ENCODE measurements at regions of chr3 and their contacts with region 1.

Region 1: DNA sequence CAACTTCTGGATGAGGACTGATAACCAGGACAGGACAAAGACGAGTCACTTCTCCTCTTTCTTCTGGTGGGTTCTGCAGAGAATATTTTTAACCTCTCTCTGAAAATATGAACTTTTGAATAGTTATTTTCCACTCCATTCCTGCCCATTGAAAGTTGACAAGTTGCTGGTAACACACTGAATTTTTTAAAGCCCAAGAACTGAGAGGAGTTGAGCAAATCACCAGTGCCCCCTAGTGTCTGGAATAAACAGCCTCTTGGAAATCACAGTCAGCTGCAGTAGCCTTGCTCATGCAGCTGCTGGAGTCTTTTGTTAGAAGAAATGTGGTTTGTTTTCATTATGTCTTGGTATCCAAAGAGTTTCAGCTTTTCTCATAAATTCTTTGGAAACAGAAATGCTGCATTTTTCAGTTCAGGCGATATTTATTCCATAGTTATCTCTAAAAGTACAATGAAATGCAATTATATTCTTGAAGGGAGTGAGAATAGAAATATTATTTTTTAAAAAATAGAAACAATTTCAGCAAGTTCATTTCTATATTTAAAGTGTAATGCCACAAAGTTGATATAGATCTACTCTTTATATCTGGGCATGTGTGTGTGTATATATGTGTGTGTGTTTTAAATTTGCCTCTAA is 741.0 kb upstream of the CBLB start:
- DNase-seq: peak; percentile 14 to 37 (median 15)
- H3K4me3 ChIP-seq: no peak overlapping the region
- H3K4me3 Mint-ChIP-seq: no peak overlapping the region
- H3K27ac ChIP-seq: no peak overlapping the region
- H3K27ac Mint-ChIP-seq: no peak overlapping the region
- H3K4me1 ChIP-seq: no peaks in the 10 kb centered on the region
- H3K4me1 Mint-ChIP-seq: no peaks in the 10 kb centered on the region
- H3K27me3 ChIP-seq: no peaks in the 10 kb centered on the region
- H3K27me3 Mint-ChIP-seq: no peaks in the 10 kb centered on the region
- CTCF ChIP-seq: peak; percentile 71

Region 2: DNA sequence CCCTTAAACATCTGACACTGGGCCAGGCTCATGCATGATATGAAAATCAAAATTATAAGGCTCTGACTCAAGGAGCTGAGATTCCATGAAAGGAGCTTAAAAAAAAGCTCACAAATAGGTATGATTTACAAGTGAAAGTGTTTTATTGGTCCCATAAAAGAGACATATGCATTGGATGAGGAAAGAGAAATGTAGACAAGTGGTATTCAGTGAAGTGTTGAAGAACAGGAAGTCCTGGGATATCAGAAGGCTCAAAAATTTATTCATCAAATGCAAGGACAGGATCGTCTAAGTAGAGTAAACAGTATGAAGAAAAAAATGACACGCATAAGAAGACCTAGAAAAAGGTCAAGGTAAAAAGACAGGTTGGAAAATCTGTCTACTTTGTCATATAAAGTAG is 929.8 kb before region 1 on chr3:
- intact Hi-C with region 1: loop called (anchors 5 to 10 kb)
- DNase-seq: no peak
- H3K4me3 ChIP-seq: no peak overlapping the region
- H3K4me3 Mint-ChIP-seq: no peak overlapping the region
- H3K27ac ChIP-seq: no peak overlapping the region
- H3K27ac Mint-ChIP-seq: no peak overlapping the region
- H3K4me1 ChIP-seq: no peaks in the 10 kb centered on the region
- H3K4me1 Mint-ChIP-seq: no peaks in the 10 kb centered on the region
- H3K27me3 ChIP-seq: no peaks in the 10 kb centered on the region
- H3K27me3 Mint-ChIP-seq: no peaks in the 10 kb centered on the region
- CTCF ChIP-seq: no peak

Region 3: GRCh38 chr3:105686278-105686897 is 923.4 kb before region 1 on chr3:
- intact Hi-C with region 1: loop called (anchors 5 to 10 kb)
- DNase-seq: peak; percentile 3 to 12 (median 7)
- H3K4me3 ChIP-seq: no peak overlapping the region
- H3K4me3 Mint-ChIP-seq: no peak overlapping the region
- H3K27ac ChIP-seq: no peak overlapping the region
- H3K27ac Mint-ChIP-seq: no peak overlapping the region
- H3K4me1 ChIP-seq: no peaks in the 10 kb centered on the region
- H3K4me1 Mint-ChIP-seq: no peaks in the 10 kb centered on the region
- H3K27me3 ChIP-seq: no peaks in the 10 kb centered on the region
- H3K27me3 Mint-ChIP-seq: no peaks in the 10 kb centered on the region
- CTCF ChIP-seq: peak; percentile 93

Region 4: GRCh38 chr3:106643684-106644161 is 33.9 kb after region 1 on chr3:
- intact Hi-C with region 1: no loop called
- DNase-seq: no peak
- H3K4me3 ChIP-seq: no peak overlapping the region
- H3K4me3 Mint-ChIP-seq: no peak overlapping the region
- H3K27ac ChIP-seq: no peak overlapping the region
- H3K27ac Mint-ChIP-seq: no peak overlapping the region
- H3K4me1 ChIP-seq: no peaks in the 10 kb centered on the region
- H3K4me1 Mint-ChIP-seq: no peaks in the 10 kb centered on the region
- H3K27me3 ChIP-seq: no peaks in the 10 kb centered on the region
- H3K27me3 Mint-ChIP-seq: no peaks in the 10 kb centered on the region
- CTCF ChIP-seq: no peak

Measured in CD14-positive monocyte (primary cell).